HCT116 (cell line): ENCODE measurements at regions of chr6 and their contacts with region 1.

Region 1: GRCh38 chr6:89940225-89941027 is 46.2 kb downstream of the GJA10 start:
- DNase-seq: peak; percentile 68
- ATAC-seq: peak; percentile 97
- H3K4me3 ChIP-seq: no peak overlapping the region
- H3K27ac ChIP-seq: no peak overlapping the region
- H3K4me1 ChIP-seq: no peaks in the 10 kb centered on the region
- H3K27me3 ChIP-seq: no peaks in the 10 kb centered on the region
- CTCF ChIP-seq: peak; percentile 67 to 82 (median 81)
- POLR2A ChIP-seq: no peak
- RAD21 ChIP-seq: peak; percentile 93

Region 2: GRCh38 chr6:90179190-90180169 is 239.1 kb after region 1 on chr6:
- CTCF ChIA-PET with region 1: interaction called, 3 read pairs
- POLR2A ChIA-PET with region 1: no interaction called
- RAD21 ChIA-PET with region 1: no interaction called
- intact Hi-C with region 1: loop called (anchors 2 kb)
- DNase-seq: no peak
- ATAC-seq: no peak
- H3K4me3 ChIP-seq: no peak overlapping the region
- H3K27ac ChIP-seq: no peak overlapping the region
- H3K4me1 ChIP-seq: peaks cover 0 to 9% of the 10 kb centered on the region in 2 experiments; a peak in 3 of 4 replicates
- H3K27me3 ChIP-seq: no peaks in the 10 kb centered on the region
- CTCF ChIP-seq: peak; percentile 22 to 62 (median 40); a peak in 4 of 6 replicates
- POLR2A ChIP-seq: no peak
- RAD21 ChIP-seq: peak; percentile 44

Region 3: DNA sequence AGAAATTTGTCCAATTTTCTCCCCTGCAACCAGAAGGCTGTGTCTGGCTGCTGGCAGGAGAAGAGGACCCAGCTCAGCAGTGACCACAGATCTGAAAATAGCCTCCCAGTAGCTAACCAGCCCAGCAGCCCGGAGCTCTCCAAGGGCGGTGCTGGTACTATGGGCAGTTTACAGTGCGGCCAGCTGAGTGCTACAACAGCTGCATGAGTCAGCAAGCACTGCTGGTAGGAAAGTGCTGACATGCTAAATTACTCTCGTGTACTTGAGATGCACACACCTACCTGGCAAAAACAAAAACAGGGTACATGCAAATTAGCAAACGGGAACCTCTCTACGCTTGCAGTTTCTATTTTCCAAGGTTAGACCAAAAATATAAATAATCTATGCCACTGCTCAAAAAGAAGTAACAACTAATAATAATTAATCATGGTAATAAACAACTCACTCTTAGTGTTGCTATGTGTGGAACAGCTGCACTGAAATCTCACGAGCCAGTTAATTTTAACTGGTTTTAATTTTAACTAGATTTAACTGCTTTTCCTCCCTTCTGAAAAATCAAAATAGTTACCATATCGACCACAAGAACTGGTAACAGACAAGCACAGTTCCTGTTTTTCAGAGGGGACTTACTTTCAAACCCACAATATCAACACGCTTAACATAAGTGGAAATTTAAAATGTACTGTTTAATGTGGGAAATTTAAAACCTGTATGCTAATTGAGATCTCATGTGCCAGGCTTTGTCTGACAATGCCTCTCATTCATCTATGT is 345.4 kb after region 1 on chr6:
- CTCF ChIA-PET with region 1: interaction called, 10 read pairs
- POLR2A ChIA-PET with region 1: no interaction called
- RAD21 ChIA-PET with region 1: interaction called, 4 to 7 read pairs
- intact Hi-C with region 1: loop called (anchors 10 kb)
- DNase-seq: peak; percentile 76
- ATAC-seq: peak; percentile 77
- H3K4me3 ChIP-seq: peak overlapping the region; percentile 46 to 61
- H3K27ac ChIP-seq: peak overlapping the region; percentile 65
- H3K4me1 ChIP-seq: peaks cover 23 to 40% of the 10 kb centered on the region in 2 experiments
- H3K27me3 ChIP-seq: no peaks in the 10 kb centered on the region
- CTCF ChIP-seq: no peak
- POLR2A ChIP-seq: no peak
- RAD21 ChIP-seq: peak; percentile 20; the same call in 1 of the 2 replicates

Region 4: GRCh38 chr6:90393232-90393884 is 452.9 kb after region 1 on chr6:
- CTCF ChIA-PET with region 1: interaction called, 8 read pairs
- POLR2A ChIA-PET with region 1: no interaction called
- RAD21 ChIA-PET with region 1: interaction called in 1 of 2 experiments, 3 read pairs
- intact Hi-C with region 1: loop called (anchors 1 kb)
- DNase-seq: peak; percentile 41
- ATAC-seq: peak; percentile 95
- H3K4me3 ChIP-seq: no peak overlapping the region
- H3K27ac ChIP-seq: no peak overlapping the region
- H3K4me1 ChIP-seq: peaks cover 0 to 11% of the 10 kb centered on the region in 2 experiments; a peak in 1 of 4 replicates
- H3K27me3 ChIP-seq: no peaks in the 10 kb centered on the region
- CTCF ChIP-seq: peak; percentile 62 to 83 (median 76); a peak in 5 of 6 replicates
- POLR2A ChIP-seq: no peak
- RAD21 ChIP-seq: peak; percentile 86

Region 5: DNA sequence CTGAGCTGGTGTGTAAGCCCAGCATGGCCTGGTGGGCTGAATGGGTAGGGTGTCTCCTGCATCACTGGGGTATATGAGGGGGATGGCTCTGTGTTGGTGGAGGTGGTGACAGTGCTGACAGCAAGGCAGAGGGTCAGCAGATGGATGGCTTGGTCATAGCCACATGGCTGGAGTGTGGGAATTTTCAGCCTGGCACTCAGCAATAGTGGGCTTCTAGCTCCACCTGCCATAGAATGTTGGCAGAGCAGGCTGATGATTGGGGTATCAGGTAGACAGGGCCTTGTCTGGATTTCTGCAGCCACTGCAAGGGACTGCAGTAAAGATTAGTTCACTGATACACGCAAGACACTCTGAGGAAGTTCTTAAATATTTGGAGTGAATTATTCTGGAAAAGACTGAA is 493.7 kb after region 1 on chr6:
- CTCF ChIA-PET with region 1: interaction called, 12 read pairs
- POLR2A ChIA-PET with region 1: no interaction called
- RAD21 ChIA-PET with region 1: interaction called in 1 of 2 experiments, 4 read pairs
- intact Hi-C with region 1: loop called (anchors 1 kb)
- DNase-seq: no peak
- ATAC-seq: peak; percentile 74
- H3K4me3 ChIP-seq: no peak overlapping the region
- H3K27ac ChIP-seq: no peak overlapping the region
- H3K4me1 ChIP-seq: no peaks in the 10 kb centered on the region
- H3K27me3 ChIP-seq: no peaks in the 10 kb centered on the region
- CTCF ChIP-seq: peak; percentile 24 to 42 (median 36); a peak in 4 of 6 replicates
- POLR2A ChIP-seq: no peak
- RAD21 ChIP-seq: peak; percentile 73

Region 6: GRCh38 chr6:90478789-90479602 is 538.6 kb after region 1 on chr6:
- CTCF ChIA-PET with region 1: interaction called, 165 read pairs
- POLR2A ChIA-PET with region 1: interaction called, 3 read pairs
- RAD21 ChIA-PET with region 1: interaction called, 19 to 22 read pairs
- intact Hi-C with region 1: loop called (anchors 1 kb)
- DNase-seq: peak; percentile 87
- ATAC-seq: peak; percentile 96
- H3K4me3 ChIP-seq: no peak overlapping the region
- H3K27ac ChIP-seq: no peak overlapping the region
- H3K4me1 ChIP-seq: peaks cover 0 to 11% of the 10 kb centered on the region in 2 experiments; a peak in 2 of 4 replicates
- H3K27me3 ChIP-seq: no peaks in the 10 kb centered on the region
- CTCF ChIP-seq: peak; percentile 79 to 91 (median 87)
- POLR2A ChIP-seq: no peak
- RAD21 ChIP-seq: peak; percentile 99

Region 7: DNA sequence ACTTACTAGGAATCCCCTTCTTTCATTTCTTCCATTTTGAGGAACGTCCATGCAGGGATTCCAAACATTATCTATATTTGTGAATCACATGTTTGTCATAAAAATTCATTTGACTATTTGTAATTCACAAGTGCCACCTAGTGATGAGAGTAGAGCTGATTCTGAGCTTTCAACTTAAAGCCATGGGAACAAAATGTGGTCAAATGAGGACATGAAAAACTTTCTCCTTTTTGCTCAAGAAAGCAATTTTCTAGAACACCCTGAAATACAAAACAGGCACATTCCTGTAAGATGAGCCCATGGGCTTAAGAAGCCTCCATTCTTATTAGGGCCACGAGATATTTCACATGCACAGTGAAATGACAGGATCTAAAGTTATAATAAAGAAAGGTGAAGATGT is 634.2 kb after region 1 on chr6:
- CTCF ChIA-PET with region 1: interaction called, 6 read pairs
- POLR2A ChIA-PET with region 1: no interaction called
- RAD21 ChIA-PET with region 1: no interaction called
- intact Hi-C with region 1: loop called (anchors 5 kb)
- DNase-seq: no peak
- ATAC-seq: no peak
- H3K4me3 ChIP-seq: no peak overlapping the region
- H3K27ac ChIP-seq: no peak overlapping the region
- H3K4me1 ChIP-seq: no peaks in the 10 kb centered on the region
- H3K27me3 ChIP-seq: no peaks in the 10 kb centered on the region
- CTCF ChIP-seq: peak in 2 of 3 experiments; percentile 13 to 21; a peak in 2 of 6 replicates
- POLR2A ChIP-seq: no peak
- RAD21 ChIP-seq: peak; percentile 36